Naive thymus-derived CD4-positive, alpha-beta T cell (primary cell): ENCODE measurements at regions of chrX and their contacts with region 1.

Region 1: DNA sequence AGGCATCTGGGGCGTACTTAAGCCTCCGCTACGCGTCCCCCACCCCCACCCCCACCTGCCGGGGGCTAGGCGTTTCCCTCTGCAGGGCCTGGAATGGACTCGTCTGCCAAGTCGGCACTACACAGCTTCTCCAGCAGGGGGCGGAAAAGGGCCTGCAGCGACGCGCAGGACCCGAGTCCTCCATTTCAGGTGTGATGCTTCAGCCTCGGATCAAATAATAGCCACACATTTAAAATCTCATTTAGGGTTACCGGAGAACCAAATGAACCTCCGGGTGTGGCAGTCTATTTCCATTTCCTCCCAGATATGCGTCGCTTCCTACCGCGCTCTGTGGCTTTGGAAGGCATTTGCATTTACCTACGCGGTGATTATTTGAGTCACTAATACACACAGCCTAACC is 2.9 kb downstream of the PAK3 start:
- DNase-seq: peak; percentile 28 to 63 (median 51)
- ATAC-seq: peak; percentile 81
- H3K4me3 ChIP-seq: no peak overlapping the region
- H3K4me3 Mint-ChIP-seq: peak overlapping the region; percentile 23 to 70 (median 50)
- H3K27ac ChIP-seq: no peak overlapping the region
- H3K27ac Mint-ChIP-seq: peak overlapping the region in 4 of 9 donors; percentile 56 to 74 (median 58)
- H3K4me1 ChIP-seq: no peaks in the 10 kb centered on the region
- H3K4me1 Mint-ChIP-seq: peaks cover 13 to 24% (median 15%) of the 10 kb centered on the region in 7 donors
- H3K27me3 ChIP-seq: no peaks in the 10 kb centered on the region
- H3K27me3 Mint-ChIP-seq: peaks cover 5 to 24% (median 13%) of the 10 kb centered on the region in 5 donors

Region 2: GRCh38 chrX:110002300-110003166 is 1096.3 kb before region 1 on chrX and contains the start of gene TMEM164:
- CTCF ChIA-PET with region 1: no interaction called
- POLR2A ChIA-PET with region 1: no interaction called
- intact Hi-C with region 1: loop called in 1 of 2 experiments (anchors 10 kb)
- DNase-seq: peak; percentile 58 to 82 (median 75)
- ATAC-seq: peak; percentile 87
- H3K4me3 ChIP-seq: peak within 1 kb of the TSS; percentile 54
- H3K4me3 Mint-ChIP-seq: peak within 1 kb of the TSS; percentile 76 to 96 (median 88)
- H3K27ac ChIP-seq: peak within 1 kb of the TSS; percentile 64
- H3K27ac Mint-ChIP-seq: peak within 1 kb of the TSS; percentile 82 to 95 (median 88)
- H3K4me1 ChIP-seq: no peaks in the 10 kb centered on the region
- H3K4me1 Mint-ChIP-seq: peaks cover 14 to 42% (median 34%) of the 10 kb centered on the region in 7 donors
- H3K27me3 ChIP-seq: no peaks in the 10 kb centered on the region
- H3K27me3 Mint-ChIP-seq: no peaks in the 10 kb centered on the region
- total RNA-seq, gene TMEM164: 16.3 to 30.1 (median 17.9) TPM

Region 3: DNA sequence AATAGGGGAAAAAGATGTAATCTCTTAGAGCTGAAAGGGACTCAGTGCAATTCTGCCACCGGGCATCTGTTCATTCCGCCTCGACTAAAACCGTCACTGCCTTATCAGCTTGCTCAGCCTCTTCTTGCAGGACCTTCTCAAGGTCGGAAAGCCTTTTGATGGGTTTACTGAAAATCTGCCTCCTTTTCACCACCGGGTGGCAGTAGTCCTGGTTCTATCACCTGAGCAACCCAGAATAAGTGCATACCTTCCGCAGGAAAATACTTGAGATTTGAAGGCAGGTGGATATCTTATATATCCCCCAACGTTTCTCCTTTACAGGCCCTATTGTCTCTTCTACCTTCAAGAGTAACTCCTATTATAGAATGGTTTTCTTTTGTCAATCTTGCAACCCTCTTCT is 106.3 kb before region 1 on chrX:
- CTCF ChIA-PET with region 1: interaction called, 5 read pairs
- POLR2A ChIA-PET with region 1: no interaction called
- intact Hi-C with region 1: loop called in 1 of 2 experiments (anchors 1 kb)
- DNase-seq: peak in 5 of 9 donors; percentile 10 to 22 (median 17)
- ATAC-seq: no peak
- H3K4me3 ChIP-seq: no peak overlapping the region
- H3K4me3 Mint-ChIP-seq: no peak overlapping the region
- H3K27ac ChIP-seq: no peak overlapping the region
- H3K27ac Mint-ChIP-seq: no peak overlapping the region
- H3K4me1 ChIP-seq: no peaks in the 10 kb centered on the region
- H3K4me1 Mint-ChIP-seq: no peaks in the 10 kb centered on the region
- H3K27me3 ChIP-seq: no peaks in the 10 kb centered on the region
- H3K27me3 Mint-ChIP-seq: peaks cover 0 to 14% (median 4%) of the 10 kb centered on the region in 5 donors

Region 4: DNA sequence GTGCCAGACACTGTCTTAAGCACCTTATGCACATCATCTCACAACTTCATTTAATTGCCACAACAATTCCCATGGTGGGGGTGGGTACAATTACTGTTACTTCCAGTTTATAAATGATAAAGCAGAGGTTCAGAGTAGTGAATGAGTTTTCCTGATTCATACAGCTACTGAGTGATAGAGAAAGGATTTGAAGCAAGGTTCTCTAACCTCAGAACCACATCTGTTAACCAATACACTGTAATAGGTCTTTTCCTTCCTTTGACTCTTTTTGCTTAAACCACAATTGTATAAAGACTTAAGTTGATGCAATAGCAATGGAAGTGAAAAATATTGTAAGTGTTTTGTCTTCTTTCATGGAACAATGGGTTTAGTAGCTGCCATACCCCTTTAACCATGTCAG is 46.4 kb before region 1 on chrX:
- CTCF ChIA-PET with region 1: no interaction called
- POLR2A ChIA-PET with region 1: no interaction called
- intact Hi-C with region 1: no loop called
- DNase-seq: peak in 4 of 9 donors; percentile 7 to 30 (median 18)
- ATAC-seq: peak; percentile 34
- H3K4me3 ChIP-seq: no peak overlapping the region
- H3K4me3 Mint-ChIP-seq: no peak overlapping the region
- H3K27ac ChIP-seq: no peak overlapping the region
- H3K27ac Mint-ChIP-seq: no peak overlapping the region
- H3K4me1 ChIP-seq: no peaks in the 10 kb centered on the region
- H3K4me1 Mint-ChIP-seq: peaks cover 0 to 6% (median 0%) of the 10 kb centered on the region in 7 donors
- H3K27me3 ChIP-seq: no peaks in the 10 kb centered on the region
- H3K27me3 Mint-ChIP-seq: peaks cover 0 to 5% (median 3%) of the 10 kb centered on the region in 5 donors

Region 5: DNA sequence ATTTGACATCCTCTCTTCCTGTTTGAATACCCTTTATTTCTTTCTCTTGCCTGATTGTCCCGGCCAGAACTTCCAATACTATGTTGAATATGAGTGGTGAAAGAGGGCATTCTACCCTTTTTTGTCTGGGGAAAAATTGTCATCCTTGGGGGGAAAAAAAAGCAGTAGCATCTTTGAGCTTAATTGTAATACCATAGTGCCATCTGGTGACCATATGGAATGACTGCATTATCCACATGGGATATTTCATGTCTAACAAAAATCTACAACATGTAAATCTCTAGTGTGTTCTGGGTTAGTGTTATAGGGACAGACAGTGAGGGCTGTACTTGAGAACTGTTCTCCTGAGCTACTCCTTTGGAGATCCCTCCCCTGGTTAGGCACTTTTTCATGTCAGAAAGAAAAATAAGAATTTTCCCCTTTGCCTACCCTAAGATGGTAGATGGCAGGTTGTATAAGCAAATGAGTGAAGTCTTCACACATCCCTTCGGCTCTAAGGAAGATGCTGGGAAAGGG is 145.4 kb after region 1 on chrX:
- CTCF ChIA-PET with region 1: no interaction called
- POLR2A ChIA-PET with region 1: no interaction called
- intact Hi-C with region 1: loop called in 1 of 2 experiments (anchors 1 kb)
- DNase-seq: no peak
- ATAC-seq: no peak
- H3K4me3 ChIP-seq: no peak overlapping the region
- H3K4me3 Mint-ChIP-seq: no peak overlapping the region
- H3K27ac ChIP-seq: no peak overlapping the region
- H3K27ac Mint-ChIP-seq: no peak overlapping the region
- H3K4me1 ChIP-seq: no peaks in the 10 kb centered on the region
- H3K4me1 Mint-ChIP-seq: no peaks in the 10 kb centered on the region
- H3K27me3 ChIP-seq: no peaks in the 10 kb centered on the region
- H3K27me3 Mint-ChIP-seq: peaks cover 0 to 2% (median 0%) of the 10 kb centered on the region in 5 donors

Region 6: GRCh38 chrX:112841114-112841819 is 1742.4 kb after region 1 on chrX:
- CTCF ChIA-PET with region 1: no interaction called
- POLR2A ChIA-PET with region 1: no interaction called
- intact Hi-C with region 1: loop called in 1 of 2 experiments (anchors 10 kb)
- DNase-seq: peak; percentile 55 to 82 (median 75)
- ATAC-seq: peak; percentile 98
- H3K4me3 ChIP-seq: peak overlapping the region; percentile 74
- H3K4me3 Mint-ChIP-seq: peak overlapping the region; percentile 81 to 94 (median 88)
- H3K27ac ChIP-seq: peak overlapping the region; percentile 66
- H3K27ac Mint-ChIP-seq: peak overlapping the region; percentile 51 to 92 (median 79)
- H3K4me1 ChIP-seq: peaks cover 0 to 6% of the 10 kb centered on the region in 2 donors
- H3K4me1 Mint-ChIP-seq: peaks cover 0 to 23% (median 7%) of the 10 kb centered on the region in 7 donors
- H3K27me3 ChIP-seq: no peaks in the 10 kb centered on the region
- H3K27me3 Mint-ChIP-seq: peaks cover 0 to 7% (median 0%) of the 10 kb centered on the region in 5 donors